Esophagus muscularis mucosa (tissue), 4 donors: ENCODE measurements at regions of chr12 and their contacts with region 1.

Region 1: GRCh38 chr12:24711056-24712008 is 237.6 kb downstream of the BCAT1 start:
- DNase-seq: no peak
- H3K4me3 ChIP-seq: no peak overlapping the region
- H3K27ac ChIP-seq: no peak overlapping the region
- H3K4me1 ChIP-seq: no peaks in the 10 kb centered on the region
- H3K27me3 ChIP-seq: no peaks in the 10 kb centered on the region
- CTCF ChIP-seq: no peak
- EP300 ChIP-seq: no peak
- POLR2A ChIP-seq: no peak

Region 2: GRCh38 chr12:23550753-23551152 is 1160.6 kb before region 1 on chr12:
- intact Hi-C with region 1: loop called (anchors 5 kb)
- DNase-seq: no peak
- H3K4me3 ChIP-seq: no peak overlapping the region
- H3K27ac ChIP-seq: no peak overlapping the region
- H3K4me1 ChIP-seq: no peaks in the 10 kb centered on the region
- H3K27me3 ChIP-seq: no peaks in the 10 kb centered on the region
- CTCF ChIP-seq: no peak
- EP300 ChIP-seq: no peak
- POLR2A ChIP-seq: no peak

Region 3: GRCh38 chr12:24767016-24767415 is 55.7 kb after region 1 on chr12:
- intact Hi-C with region 1: no loop called
- DNase-seq: no peak
- H3K4me3 ChIP-seq: no peak overlapping the region
- H3K27ac ChIP-seq: no peak overlapping the region
- H3K4me1 ChIP-seq: no peaks in the 10 kb centered on the region
- H3K27me3 ChIP-seq: no peaks in the 10 kb centered on the region
- CTCF ChIP-seq: no peak
- EP300 ChIP-seq: no peak
- POLR2A ChIP-seq: no peak

Region 4: GRCh38 chr12:24778486-24779304 is 67.4 kb after region 1 on chr12:
- intact Hi-C with region 1: no loop called
- DNase-seq: no peak
- H3K4me3 ChIP-seq: no peak overlapping the region
- H3K27ac ChIP-seq: no peak overlapping the region
- H3K4me1 ChIP-seq: peaks cover 0 to 16% (median 9%) of the 10 kb centered on the region in 4 donors
- H3K27me3 ChIP-seq: no peaks in the 10 kb centered on the region
- CTCF ChIP-seq: peak in 2 of 3 experiments; percentile 8 to 20
- EP300 ChIP-seq: no peak
- POLR2A ChIP-seq: no peak